ENCODE measurements at regions of chr5 and their contacts with region 1.

Region 1: DNA sequence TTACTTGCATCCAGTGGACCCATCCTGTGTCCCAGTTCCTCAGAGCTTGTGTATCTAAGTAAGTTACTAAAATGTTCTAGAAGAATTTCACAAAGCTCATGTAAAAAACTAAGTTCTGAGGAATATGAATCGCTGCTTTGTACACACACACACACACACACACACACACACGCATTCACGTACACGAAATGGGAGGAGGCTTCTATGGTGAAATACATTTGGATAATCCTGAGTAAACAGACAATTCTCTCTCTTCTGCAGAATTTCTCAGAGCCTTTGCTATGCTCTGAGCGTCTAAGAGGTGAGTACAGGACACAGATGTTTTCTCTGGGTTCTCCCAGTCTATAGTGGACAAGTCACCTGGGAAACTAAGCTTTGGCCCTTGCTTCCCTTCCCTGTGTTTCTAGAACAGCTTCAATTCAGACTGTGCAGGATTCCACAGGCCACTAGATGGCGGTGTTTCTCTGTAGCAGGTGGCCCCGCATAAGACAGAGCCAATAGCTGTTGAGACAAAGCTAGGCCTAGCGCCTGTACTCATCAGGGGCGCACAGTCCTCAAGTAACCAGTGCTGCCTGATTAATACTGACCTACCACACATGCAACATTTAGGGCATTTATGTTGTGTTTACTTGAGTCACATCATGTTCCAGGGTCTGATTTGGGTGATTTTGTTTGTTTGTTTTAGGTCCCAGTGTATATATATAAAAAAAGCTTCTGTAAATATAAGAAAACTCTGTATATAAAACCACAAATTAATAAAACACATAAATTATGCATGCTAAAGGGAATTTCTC is 114.8 kb downstream of the LIFR start:
- DNase-seq: peak; percentile 87
- H3K4me3 Mint-ChIP-seq: no peak overlapping the region
- H3K27ac Mint-ChIP-seq: no peak overlapping the region
- H3K4me1 Mint-ChIP-seq: no peaks in the 10 kb centered on the region
- H3K27me3 Mint-ChIP-seq: peaks cover 15% of the 10 kb centered on the region

Region 2: GRCh38 chr5:38453506-38453905 is 11.9 kb after region 1 on chr5:
- CTCF ChIA-PET with region 1: interaction called, 46 read pairs
- POLR2A ChIA-PET with region 1: no interaction called
- intact Hi-C with region 1: no loop called
- DNase-seq: peak; percentile 54
- H3K4me3 Mint-ChIP-seq: no peak overlapping the region
- H3K27ac Mint-ChIP-seq: no peak overlapping the region
- H3K4me1 Mint-ChIP-seq: peaks cover 23% of the 10 kb centered on the region
- H3K27me3 Mint-ChIP-seq: peaks cover 65% of the 10 kb centered on the region

Region 3: GRCh38 chr5:38551030-38552017 is 109.7 kb after region 1 on chr5:
- CTCF ChIA-PET with region 1: interaction called, 28 read pairs
- POLR2A ChIA-PET with region 1: no interaction called
- intact Hi-C with region 1: loop called (anchors 1 kb)
- DNase-seq: no peak
- H3K4me3 Mint-ChIP-seq: no peak overlapping the region
- H3K27ac Mint-ChIP-seq: no peak overlapping the region
- H3K4me1 Mint-ChIP-seq: peaks cover 3% of the 10 kb centered on the region
- H3K27me3 Mint-ChIP-seq: peaks cover 28% of the 10 kb centered on the region

Region 4: DNA sequence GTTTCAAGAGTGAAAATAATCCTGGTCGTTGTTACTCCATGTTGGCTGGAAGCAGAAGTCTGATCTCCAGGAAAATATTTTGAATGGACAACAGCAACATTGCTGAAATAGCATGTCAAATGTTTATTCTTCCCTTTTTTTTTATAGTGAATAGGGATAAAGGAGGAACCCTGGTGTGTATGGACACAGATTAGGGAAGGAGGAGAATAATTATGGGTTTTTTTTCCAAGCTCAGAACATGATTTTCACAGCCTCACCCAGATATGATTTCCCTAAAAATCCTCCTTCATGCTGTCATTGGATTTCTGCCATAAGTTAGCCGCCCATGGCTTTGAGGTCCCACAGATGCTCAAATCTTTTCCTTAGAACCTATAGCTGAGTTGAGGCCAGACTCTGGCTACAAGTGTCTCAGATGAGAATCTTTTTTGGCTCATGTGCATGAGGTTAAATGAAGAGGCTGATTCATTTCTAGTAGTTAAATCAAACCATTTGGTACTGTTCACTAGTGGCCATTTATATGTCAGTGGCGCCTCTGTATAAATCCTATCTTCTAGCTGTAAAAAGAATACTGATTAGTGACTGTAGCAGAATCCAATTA is 180.3 kb after region 1 on chr5:
- CTCF ChIA-PET with region 1: no interaction called
- POLR2A ChIA-PET with region 1: no interaction called
- intact Hi-C with region 1: no loop called
- DNase-seq: no peak
- H3K4me3 Mint-ChIP-seq: no peak overlapping the region
- H3K27ac Mint-ChIP-seq: no peak overlapping the region
- H3K4me1 Mint-ChIP-seq: no peaks in the 10 kb centered on the region
- H3K27me3 Mint-ChIP-seq: no peaks in the 10 kb centered on the region

Region 5: DNA sequence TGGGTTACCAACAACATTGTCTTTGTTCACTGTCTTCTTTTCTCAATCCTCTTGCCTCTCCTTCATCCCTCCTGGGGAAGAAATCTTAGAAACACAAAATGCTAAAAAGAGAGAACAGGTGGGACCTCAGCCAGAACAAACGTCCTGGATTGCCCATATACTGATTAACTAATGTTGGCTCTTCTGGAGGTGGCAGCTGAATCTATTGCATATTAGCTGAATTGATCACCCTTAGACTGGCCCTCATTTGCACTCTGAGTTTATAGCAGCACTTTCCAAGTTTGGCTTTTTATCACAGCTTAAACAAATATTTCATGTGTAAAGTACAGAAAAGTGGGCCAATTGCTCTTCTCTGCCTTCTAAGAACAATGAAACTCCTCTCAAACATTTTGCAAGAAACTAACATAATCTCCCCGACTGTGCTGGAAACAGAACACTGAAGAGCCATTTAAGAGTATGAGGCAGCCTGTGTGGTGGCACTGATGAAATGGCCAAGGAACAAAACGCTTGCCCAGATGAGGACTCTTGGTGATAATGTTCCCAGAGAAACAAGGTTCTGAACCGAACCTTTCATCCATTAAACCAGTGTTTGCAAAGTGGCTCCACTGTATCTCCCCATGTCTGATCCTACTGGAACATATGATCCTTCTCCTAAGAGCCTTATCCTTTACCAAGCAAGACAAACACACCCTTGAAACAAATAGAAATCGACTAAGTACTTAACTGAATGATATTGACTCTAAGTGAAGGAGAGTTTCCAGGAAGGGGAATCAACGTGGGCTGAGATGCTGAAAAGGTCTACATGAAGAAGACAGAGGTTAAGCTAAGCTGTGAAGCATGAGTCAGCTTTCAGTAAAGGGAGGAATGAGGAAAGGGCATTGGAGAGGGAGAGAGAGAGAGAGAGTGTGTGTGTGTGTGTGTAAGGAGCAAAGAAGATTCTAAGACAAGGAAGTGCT is 198.0 kb after region 1 on chr5:
- CTCF ChIA-PET with region 1: no interaction called
- POLR2A ChIA-PET with region 1: no interaction called
- intact Hi-C with region 1: no loop called
- DNase-seq: no peak
- H3K4me3 Mint-ChIP-seq: no peak overlapping the region
- H3K27ac Mint-ChIP-seq: no peak overlapping the region
- H3K4me1 Mint-ChIP-seq: no peaks in the 10 kb centered on the region
- H3K27me3 Mint-ChIP-seq: peaks cover 7% of the 10 kb centered on the region

Region 6: GRCh38 chr5:38809388-38810359 is 368.0 kb after region 1 on chr5:
- CTCF ChIA-PET with region 1: interaction called, 162 read pairs
- POLR2A ChIA-PET with region 1: interaction called, 3 read pairs
- intact Hi-C with region 1: loop called (anchors 1 kb)
- DNase-seq: peak; percentile 75
- H3K4me3 Mint-ChIP-seq: no peak overlapping the region
- H3K27ac Mint-ChIP-seq: no peak overlapping the region
- H3K4me1 Mint-ChIP-seq: peaks cover 19% of the 10 kb centered on the region
- H3K27me3 Mint-ChIP-seq: peaks cover 26% of the 10 kb centered on the region

Region 7: GRCh38 chr5:39080597-39081204 is 639.1 kb after region 1 on chr5:
- CTCF ChIA-PET with region 1: interaction called, 15 read pairs
- POLR2A ChIA-PET with region 1: no interaction called
- intact Hi-C with region 1: loop called (anchors 2 kb)
- DNase-seq: peak; percentile 55
- H3K4me3 Mint-ChIP-seq: no peak overlapping the region
- H3K27ac Mint-ChIP-seq: no peak overlapping the region
- H3K4me1 Mint-ChIP-seq: peaks cover 19% of the 10 kb centered on the region
- H3K27me3 Mint-ChIP-seq: peaks cover 31% of the 10 kb centered on the region

Measured in activated CD4-positive, alpha-beta memory T cell treated with anti-CD3 and anti-CD28 coated beads for 36 hours (primary cell).